ENCODE measurements at regions of chr18 and their contacts with region 1.

Region 1: DNA sequence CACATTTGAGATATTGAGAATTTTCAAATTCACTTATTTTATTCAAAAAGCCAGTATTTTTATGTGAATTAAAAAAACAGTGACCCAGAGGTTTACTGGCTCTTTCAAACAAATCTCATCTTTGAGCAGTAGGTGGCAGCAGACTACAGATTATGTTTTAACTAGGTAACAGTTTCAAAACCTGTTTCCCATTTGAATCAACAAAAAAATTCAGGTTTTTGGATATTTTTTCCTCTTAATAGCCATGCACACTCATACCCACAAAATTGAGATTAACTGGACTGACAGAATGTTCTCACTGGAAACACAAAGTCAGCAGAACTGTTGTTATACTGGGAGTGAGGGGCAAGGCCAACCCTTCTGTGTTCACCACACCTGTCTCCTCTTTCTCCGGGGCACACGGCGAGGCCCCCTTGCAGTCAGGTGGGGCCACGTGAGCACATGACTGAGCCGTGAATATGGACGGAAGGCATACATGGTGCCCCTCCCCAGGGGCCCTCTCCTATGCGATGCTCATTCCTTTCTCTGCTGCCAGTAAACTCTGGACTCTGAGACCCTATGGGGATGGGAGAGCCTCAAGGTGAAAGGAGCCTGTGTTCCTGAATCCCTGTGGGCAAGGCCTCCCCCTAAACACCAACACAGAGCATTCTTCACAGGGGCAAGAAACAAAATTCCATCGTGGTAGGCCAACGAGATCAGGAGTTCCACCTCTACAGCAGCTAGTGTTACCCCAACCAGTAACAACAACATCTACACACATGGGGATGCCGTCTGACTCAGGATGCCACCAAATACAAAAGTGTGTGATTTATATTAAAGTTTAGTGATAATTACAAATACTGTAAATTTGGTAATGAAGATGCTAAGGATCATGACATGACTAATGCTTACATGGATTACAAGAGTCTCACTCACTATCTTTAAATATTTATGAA is 80.4 kb downstream of the LPIN2 start:
- DNase-seq: peak; percentile 59 to 79 (median 73)
- H3K4me3 ChIP-seq: no peak overlapping the region
- H3K4me3 Mint-ChIP-seq: peak overlapping the region in 6 of 8 donors; percentile 18 to 64 (median 44)
- H3K27ac ChIP-seq: peak overlapping the region; percentile 56
- H3K27ac Mint-ChIP-seq: peak overlapping the region; percentile 83 to 94 (median 89)
- H3K4me1 ChIP-seq: peaks cover 36% of the 10 kb centered on the region
- H3K4me1 Mint-ChIP-seq: peaks cover 29 to 43% (median 37%) of the 10 kb centered on the region in 4 donors
- H3K27me3 ChIP-seq: no peaks in the 10 kb centered on the region
- H3K27me3 Mint-ChIP-seq: no peaks in the 10 kb centered on the region

Region 2: DNA sequence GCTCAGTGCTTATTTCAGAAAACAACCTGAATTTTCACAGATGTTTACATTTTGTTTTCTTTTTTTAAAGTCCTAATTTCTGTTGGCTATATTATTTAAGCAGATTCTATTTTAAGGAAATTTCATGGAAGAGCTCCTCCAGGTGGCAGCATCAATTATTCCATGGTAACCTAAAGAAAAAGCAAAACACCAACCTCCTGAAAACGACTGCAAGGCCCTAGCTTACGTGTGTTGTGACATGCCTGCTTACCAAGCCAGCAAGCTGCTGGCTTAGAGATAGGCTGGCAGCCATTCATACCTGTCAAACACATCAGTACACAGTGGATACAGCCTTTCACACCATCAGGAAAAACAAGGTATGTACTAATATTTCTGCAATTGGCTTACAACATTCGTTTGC is 15.5 kb after region 1 on chr18:
- CTCF ChIA-PET with region 1: interaction called, 34 read pairs
- POLR2A ChIA-PET with region 1: interaction called, 3 read pairs
- intact Hi-C with region 1: loop called (anchors 2 kb)
- DNase-seq: no peak
- H3K4me3 ChIP-seq: no peak overlapping the region
- H3K4me3 Mint-ChIP-seq: no peak overlapping the region
- H3K27ac ChIP-seq: no peak overlapping the region
- H3K27ac Mint-ChIP-seq: peak overlapping the region in 2 of 7 donors; percentile 41 to 57
- H3K4me1 ChIP-seq: peaks cover 39% of the 10 kb centered on the region
- H3K4me1 Mint-ChIP-seq: peaks cover 33 to 66% (median 51%) of the 10 kb centered on the region in 4 donors
- H3K27me3 ChIP-seq: no peaks in the 10 kb centered on the region
- H3K27me3 Mint-ChIP-seq: no peaks in the 10 kb centered on the region

Region 3: GRCh38 chr18:2978646-2979045 is 46.1 kb after region 1 on chr18:
- CTCF ChIA-PET with region 1: interaction called, 263 read pairs
- POLR2A ChIA-PET with region 1: interaction called, 18 read pairs
- intact Hi-C with region 1: no loop called
- DNase-seq: peak in 1 of 5 donors; percentile 74
- H3K4me3 ChIP-seq: peak overlapping the region; percentile 8 to 31
- H3K4me3 Mint-ChIP-seq: peak overlapping the region; percentile 75 to 96 (median 90)
- H3K27ac ChIP-seq: peak overlapping the region; percentile 72
- H3K27ac Mint-ChIP-seq: peak overlapping the region; percentile 89 to 96 (median 93)
- H3K4me1 ChIP-seq: peaks cover 90% of the 10 kb centered on the region
- H3K4me1 Mint-ChIP-seq: peaks cover 55 to 93% (median 68%) of the 10 kb centered on the region in 4 donors
- H3K27me3 ChIP-seq: no peaks in the 10 kb centered on the region
- H3K27me3 Mint-ChIP-seq: no peaks in the 10 kb centered on the region

Region 4: GRCh38 chr18:3151399-3152264 is 219.1 kb after region 1 on chr18:
- CTCF ChIA-PET with region 1: interaction called, 19 read pairs
- POLR2A ChIA-PET with region 1: no interaction called
- intact Hi-C with region 1: loop called (anchors 1 kb)
- DNase-seq: peak in 4 of 5 donors; percentile 23 to 34 (median 31)
- H3K4me3 ChIP-seq: no peak overlapping the region
- H3K4me3 Mint-ChIP-seq: no peak overlapping the region
- H3K27ac ChIP-seq: no peak overlapping the region
- H3K27ac Mint-ChIP-seq: peak overlapping the region in 1 of 7 donors; percentile 46
- H3K4me1 ChIP-seq: no peaks in the 10 kb centered on the region
- H3K4me1 Mint-ChIP-seq: peaks cover 0 to 6% (median 4%) of the 10 kb centered on the region in 4 donors
- H3K27me3 ChIP-seq: no peaks in the 10 kb centered on the region
- H3K27me3 Mint-ChIP-seq: peaks cover 0 to 4% of the 10 kb centered on the region in 2 donors

Region 5: GRCh38 chr18:4544134-4544533 is 1611.6 kb after region 1 on chr18:
- CTCF ChIA-PET with region 1: no interaction called
- POLR2A ChIA-PET with region 1: no interaction called
- intact Hi-C with region 1: no loop called
- DNase-seq: no peak
- H3K4me3 ChIP-seq: no peak overlapping the region
- H3K4me3 Mint-ChIP-seq: no peak overlapping the region
- H3K27ac ChIP-seq: no peak overlapping the region
- H3K27ac Mint-ChIP-seq: no peak overlapping the region
- H3K4me1 ChIP-seq: no peaks in the 10 kb centered on the region
- H3K4me1 Mint-ChIP-seq: no peaks in the 10 kb centered on the region
- H3K27me3 ChIP-seq: no peaks in the 10 kb centered on the region
- H3K27me3 Mint-ChIP-seq: no peaks in the 10 kb centered on the region